ENCODE measurements at regions of chr16 and their contacts with region 1.

Region 1: GRCh38 chr16:2692948-2693651 is 10.8 kb downstream of the KCTD5 start:
- DNase-seq: no peak
- H3K4me3 ChIP-seq: no peak overlapping the region
- H3K27ac ChIP-seq: no peak overlapping the region
- H3K4me1 ChIP-seq: no peaks in the 10 kb centered on the region
- H3K27me3 ChIP-seq: no peaks in the 10 kb centered on the region
- CTCF ChIP-seq: no peak

Region 2: GRCh38 chr16:2739625-2740435 is 46.7 kb after region 1 on chr16:
- CTCF ChIA-PET with region 1: no interaction called
- dilution Hi-C with region 1: no loop called
- in situ Hi-C with region 1: no loop called
- intact Hi-C with region 1: no loop called
- DNase-seq: no peak
- H3K4me3 ChIP-seq: no peak overlapping the region
- H3K27ac ChIP-seq: no peak overlapping the region
- H3K4me1 ChIP-seq: peaks cover 8% of the 10 kb centered on the region
- H3K27me3 ChIP-seq: no peaks in the 10 kb centered on the region
- CTCF ChIP-seq: no peak

Region 3: DNA sequence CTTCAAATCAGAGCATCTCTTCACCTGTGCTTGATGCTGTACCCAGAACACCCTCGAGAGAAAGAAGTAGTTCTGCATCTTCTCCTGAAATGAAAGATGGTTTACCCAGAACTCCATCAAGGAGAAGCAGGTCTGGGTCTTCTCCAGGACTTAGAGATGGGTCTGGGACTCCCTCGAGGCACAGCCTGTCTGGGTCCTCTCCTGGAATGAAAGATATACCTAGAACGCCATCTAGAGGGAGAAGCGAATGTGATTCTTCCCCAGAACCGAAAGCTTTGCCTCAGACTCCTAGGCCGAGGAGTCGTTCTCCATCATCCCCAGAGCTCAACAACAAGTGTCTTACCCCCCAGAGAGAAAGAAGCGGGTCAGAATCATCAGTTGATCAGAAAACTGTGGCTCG is 71.6 kb after region 1 on chr16:
- CTCF ChIA-PET with region 1: no interaction called
- dilution Hi-C with region 1: loop called (anchors 5 kb)
- in situ Hi-C with region 1: no loop called
- intact Hi-C with region 1: no loop called
- DNase-seq: no peak
- H3K4me3 ChIP-seq: no peak overlapping the region
- H3K27ac ChIP-seq: no peak overlapping the region
- H3K4me1 ChIP-seq: peaks cover 28% of the 10 kb centered on the region
- H3K27me3 ChIP-seq: no peaks in the 10 kb centered on the region
- CTCF ChIP-seq: peak in 1 of 2 donors; percentile 4

Region 4: GRCh38 chr16:2897113-2897512 is 204.0 kb after region 1 on chr16:
- CTCF ChIA-PET with region 1: no interaction called
- dilution Hi-C with region 1: loop called (anchors 10 kb)
- in situ Hi-C with region 1: no loop called
- intact Hi-C with region 1: no loop called
- DNase-seq: no peak
- H3K4me3 ChIP-seq: no peak overlapping the region
- H3K27ac ChIP-seq: no peak overlapping the region
- H3K4me1 ChIP-seq: no peaks in the 10 kb centered on the region
- H3K27me3 ChIP-seq: no peaks in the 10 kb centered on the region
- CTCF ChIP-seq: no peak